ENCODE measurements at regions of chr11 and their contacts with region 1.

Region 1: DNA sequence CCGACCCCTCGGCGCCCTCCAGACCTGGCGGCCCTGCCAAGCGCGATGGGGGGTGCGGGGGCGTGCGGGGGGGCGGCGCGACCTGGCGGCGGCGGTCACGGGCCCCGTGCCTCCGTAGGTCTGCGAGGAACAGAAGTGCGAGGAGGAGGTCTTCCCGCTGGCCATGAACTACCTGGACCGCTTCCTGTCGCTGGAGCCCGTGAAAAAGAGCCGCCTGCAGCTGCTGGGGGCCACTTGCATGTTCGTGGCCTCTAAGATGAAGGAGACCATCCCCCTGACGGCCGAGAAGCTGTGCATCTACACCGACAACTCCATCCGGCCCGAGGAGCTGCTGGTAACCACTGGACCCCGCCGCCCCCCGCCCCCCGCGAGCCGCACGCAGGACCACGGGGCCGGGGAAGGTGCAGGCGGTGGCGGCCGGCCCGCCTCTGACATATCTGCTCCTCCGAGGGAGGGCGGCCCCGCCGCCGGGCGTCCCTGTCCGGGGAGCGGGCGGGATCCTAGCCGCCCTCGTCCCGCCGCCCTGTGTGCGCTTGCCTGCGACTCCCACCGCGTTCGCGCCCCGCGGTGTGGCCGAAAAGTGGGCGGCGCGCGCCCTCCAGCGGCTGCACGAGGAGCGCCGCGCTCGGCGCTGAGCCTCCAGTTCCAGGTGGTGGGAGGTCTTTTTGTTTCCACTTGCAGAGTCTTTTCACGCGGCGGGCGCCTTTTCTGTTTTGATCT is 2.1 kb downstream of the CCND1 start:
- DNase-seq: peak; percentile 84
- H3K4me3 Mint-ChIP-seq: peak overlapping the region; percentile 88
- H3K27ac Mint-ChIP-seq: peak overlapping the region; percentile 89
- H3K4me1 Mint-ChIP-seq: peaks cover 8% of the 10 kb centered on the region
- H3K27me3 Mint-ChIP-seq: no peaks in the 10 kb centered on the region
- CTCF ChIP-seq: peak; percentile 92

Region 2: DNA sequence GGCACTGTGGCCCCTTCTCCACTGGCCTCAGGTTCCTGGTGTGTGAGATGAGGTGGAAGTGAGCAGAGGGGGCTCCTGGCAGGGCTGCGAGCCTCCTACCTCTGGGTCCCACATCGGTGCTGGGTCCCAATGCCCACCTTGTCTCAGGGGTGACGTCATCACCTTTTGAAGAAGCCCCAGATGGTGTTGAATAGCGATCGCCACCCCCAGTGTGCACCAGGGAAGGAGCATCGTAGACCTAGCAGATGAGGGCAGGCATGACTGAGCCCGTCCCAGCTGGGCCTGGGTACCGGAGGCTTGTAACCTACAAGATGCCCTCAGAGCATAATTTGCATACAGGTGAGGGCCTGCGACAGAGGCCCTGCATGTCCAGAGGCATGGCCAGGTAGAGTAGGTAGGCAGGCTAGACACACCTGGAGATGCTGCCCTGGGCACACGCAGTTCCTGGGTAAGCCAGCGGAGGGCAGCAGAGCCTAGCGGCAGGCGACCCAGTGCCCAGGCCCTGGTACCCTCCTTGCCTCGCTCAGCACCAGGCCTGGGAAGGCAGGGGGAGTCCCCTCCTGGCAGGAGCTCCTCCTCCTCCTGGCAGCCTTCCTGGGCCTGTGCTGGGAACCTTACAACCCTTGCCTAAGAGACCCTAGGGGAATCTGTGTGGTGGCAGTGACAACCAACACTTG is 541.8 kb before region 1 on chr11:
- CTCF ChIA-PET with region 1: interaction called, 23 read pairs
- intact Hi-C with region 1: loop called (anchors 1 kb)
- DNase-seq: peak; percentile 93
- H3K4me3 Mint-ChIP-seq: no peak overlapping the region
- H3K27ac Mint-ChIP-seq: no peak overlapping the region
- H3K4me1 Mint-ChIP-seq: peaks cover 26% of the 10 kb centered on the region
- H3K27me3 Mint-ChIP-seq: no peaks in the 10 kb centered on the region
- CTCF ChIP-seq: peak; percentile 99

Region 3: DNA sequence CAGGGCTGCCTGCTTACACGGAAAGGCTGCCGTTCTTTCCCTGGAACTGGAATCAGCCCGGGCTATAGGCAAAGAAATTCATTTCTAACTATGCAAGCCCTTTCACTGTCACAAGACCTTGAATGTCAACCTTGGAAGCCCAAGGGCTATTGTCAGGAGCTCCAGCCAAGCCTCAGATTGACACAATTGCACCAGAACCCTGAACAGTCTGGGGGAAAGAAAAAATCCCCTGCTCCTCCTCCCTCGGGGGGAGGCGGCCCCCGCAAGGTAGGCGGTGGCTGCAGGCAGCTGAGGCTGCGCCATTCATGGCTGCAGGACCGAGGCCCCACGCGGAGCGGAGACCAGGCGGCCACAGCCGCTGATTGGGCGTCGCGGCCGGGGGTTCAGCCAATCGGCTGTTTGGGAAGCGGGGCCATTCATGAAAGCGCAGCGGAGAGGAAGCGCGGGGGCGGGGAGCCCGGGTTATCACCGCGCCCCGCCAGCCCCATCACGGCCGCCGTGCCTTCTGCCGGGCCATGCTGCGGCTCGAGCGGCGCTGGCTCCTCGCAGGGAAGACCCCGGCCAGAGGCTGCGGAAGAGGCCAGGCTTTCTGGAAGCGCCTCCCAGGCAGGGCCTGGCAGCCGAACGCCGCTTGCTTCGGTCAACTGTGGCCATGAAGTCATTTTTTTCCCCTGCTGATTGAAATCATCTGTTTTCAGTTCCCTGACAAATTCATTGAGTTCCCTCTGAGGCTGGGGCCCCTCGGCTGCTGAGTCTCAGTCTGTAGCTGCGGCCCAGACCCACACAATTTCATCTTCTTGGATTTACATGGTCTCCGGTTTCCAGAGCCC is 199.7 kb before region 1 on chr11:
- CTCF ChIA-PET with region 1: no interaction called
- intact Hi-C with region 1: loop called (anchors 5 kb)
- DNase-seq: peak; percentile 83
- H3K4me3 Mint-ChIP-seq: peak overlapping the region; percentile 39
- H3K27ac Mint-ChIP-seq: peak overlapping the region; percentile 54
- H3K4me1 Mint-ChIP-seq: peaks cover 48% of the 10 kb centered on the region
- H3K27me3 Mint-ChIP-seq: no peaks in the 10 kb centered on the region
- CTCF ChIP-seq: no peak

Region 4: GRCh38 chr11:69497221-69497787 is 145.8 kb before region 1 on chr11:
- CTCF ChIA-PET with region 1: no interaction called
- intact Hi-C with region 1: loop called (anchors 5 kb)
- DNase-seq: peak; percentile 89
- H3K4me3 Mint-ChIP-seq: no peak overlapping the region
- H3K27ac Mint-ChIP-seq: no peak overlapping the region
- H3K4me1 Mint-ChIP-seq: peaks cover 18% of the 10 kb centered on the region
- H3K27me3 Mint-ChIP-seq: peaks cover 23% of the 10 kb centered on the region
- CTCF ChIP-seq: no peak

Region 5: GRCh38 chr11:69670158-69670845 is 27.2 kb after region 1 on chr11:
- CTCF ChIA-PET with region 1: interaction called, 12 read pairs
- intact Hi-C with region 1: no loop called
- DNase-seq: peak; percentile 86
- H3K4me3 Mint-ChIP-seq: no peak overlapping the region
- H3K27ac Mint-ChIP-seq: no peak overlapping the region
- H3K4me1 Mint-ChIP-seq: peaks cover 26% of the 10 kb centered on the region
- H3K27me3 Mint-ChIP-seq: no peaks in the 10 kb centered on the region
- CTCF ChIP-seq: peak; percentile 82

Region 6: DNA sequence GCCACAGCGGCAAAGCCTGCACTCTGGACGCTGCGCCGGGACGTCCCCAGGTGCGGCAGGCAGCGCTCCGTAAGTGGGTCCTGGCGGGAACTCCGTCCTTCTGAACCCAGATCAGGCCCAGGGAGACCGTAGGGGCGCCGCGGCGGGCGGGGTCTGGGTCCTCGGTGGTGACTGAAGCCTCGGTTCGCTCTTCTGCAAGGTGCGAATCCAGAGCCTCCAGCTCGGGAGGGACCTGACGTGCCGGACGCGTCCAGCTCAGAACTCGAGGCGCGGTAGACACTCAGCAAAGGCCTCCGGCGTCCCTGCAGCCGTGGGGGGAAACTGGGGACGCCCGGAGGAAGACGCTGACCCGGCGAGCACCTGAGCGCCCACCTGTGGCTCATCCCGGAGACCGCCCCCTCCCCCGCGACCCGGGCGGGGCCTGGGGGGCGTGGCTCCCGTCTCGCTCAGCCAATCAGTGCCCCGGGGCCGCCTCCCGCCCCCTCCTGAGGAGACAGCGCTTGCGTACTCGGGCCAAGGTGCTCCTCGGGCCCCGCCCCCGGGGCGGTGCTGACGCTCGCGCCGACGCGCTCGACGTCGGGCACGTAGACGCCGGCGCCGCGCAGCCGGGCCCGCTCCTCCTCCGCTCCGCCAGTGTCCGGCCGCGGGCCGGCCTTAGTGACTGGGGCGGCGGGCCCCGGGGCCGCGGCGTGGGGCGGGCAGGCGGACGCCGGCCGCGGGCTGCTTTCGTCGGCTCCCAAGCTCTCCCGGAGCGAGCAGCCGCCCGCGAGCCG is 627.2 kb after region 1 on chr11 and contains the start of gene PPFIA1:
- CTCF ChIA-PET with region 1: no interaction called
- intact Hi-C with region 1: no loop called
- DNase-seq: peak; percentile 99
- H3K4me3 Mint-ChIP-seq: peak within 1 kb of the TSS; percentile 96
- H3K27ac Mint-ChIP-seq: peak within 1 kb of the TSS; percentile 96
- H3K4me1 Mint-ChIP-seq: peaks cover 41% of the 10 kb centered on the region
- H3K27me3 Mint-ChIP-seq: peaks cover 9% of the 10 kb centered on the region
- CTCF ChIP-seq: no peak
- total RNA-seq, gene PPFIA1: 76.5 and 84.0 TPM in 2 replicates